ENCODE measurements at regions of chr1 and their contacts with region 1.

Region 1: GRCh38 chr1:116485071-116485735 is 85.6 kb downstream of the CD58 start:
- DNase-seq: peak; percentile 81
- H3K4me3 ChIP-seq: no peak overlapping the region
- H3K27ac ChIP-seq: no peak overlapping the region
- H3K4me1 ChIP-seq: peaks cover 34% of the 10 kb centered on the region
- H3K27me3 ChIP-seq: no peaks in the 10 kb centered on the region
- CTCF ChIP-seq: peak; percentile 91 to 94
- POLR2A ChIP-seq: no peak

Region 2: GRCh38 chr1:116159177-116159576 is 326.0 kb before region 1 on chr1:
- CTCF ChIA-PET with region 1: interaction called, 51 read pairs
- POLR2A ChIA-PET with region 1: no interaction called
- dilution Hi-C with region 1: no loop called
- intact Hi-C with region 1: no loop called
- DNase-seq: no peak
- H3K4me3 ChIP-seq: no peak overlapping the region
- H3K27ac ChIP-seq: no peak overlapping the region
- H3K4me1 ChIP-seq: no peaks in the 10 kb centered on the region
- H3K27me3 ChIP-seq: peaks cover 16 to 18% of the 10 kb centered on the region in 2 experiments
- CTCF ChIP-seq: no peak
- POLR2A ChIP-seq: no peak

Region 3: GRCh38 chr1:116202934-116203723 is 282.1 kb before region 1 on chr1:
- CTCF ChIA-PET with region 1: no interaction called
- POLR2A ChIA-PET with region 1: no interaction called
- dilution Hi-C with region 1: no loop called
- intact Hi-C with region 1: no loop called
- DNase-seq: no peak
- H3K4me3 ChIP-seq: no peak overlapping the region
- H3K27ac ChIP-seq: no peak overlapping the region
- H3K4me1 ChIP-seq: no peaks in the 10 kb centered on the region
- H3K27me3 ChIP-seq: peaks cover 0 to 4% of the 10 kb centered on the region in 2 experiments
- CTCF ChIP-seq: no peak
- POLR2A ChIP-seq: no peak

Region 4: DNA sequence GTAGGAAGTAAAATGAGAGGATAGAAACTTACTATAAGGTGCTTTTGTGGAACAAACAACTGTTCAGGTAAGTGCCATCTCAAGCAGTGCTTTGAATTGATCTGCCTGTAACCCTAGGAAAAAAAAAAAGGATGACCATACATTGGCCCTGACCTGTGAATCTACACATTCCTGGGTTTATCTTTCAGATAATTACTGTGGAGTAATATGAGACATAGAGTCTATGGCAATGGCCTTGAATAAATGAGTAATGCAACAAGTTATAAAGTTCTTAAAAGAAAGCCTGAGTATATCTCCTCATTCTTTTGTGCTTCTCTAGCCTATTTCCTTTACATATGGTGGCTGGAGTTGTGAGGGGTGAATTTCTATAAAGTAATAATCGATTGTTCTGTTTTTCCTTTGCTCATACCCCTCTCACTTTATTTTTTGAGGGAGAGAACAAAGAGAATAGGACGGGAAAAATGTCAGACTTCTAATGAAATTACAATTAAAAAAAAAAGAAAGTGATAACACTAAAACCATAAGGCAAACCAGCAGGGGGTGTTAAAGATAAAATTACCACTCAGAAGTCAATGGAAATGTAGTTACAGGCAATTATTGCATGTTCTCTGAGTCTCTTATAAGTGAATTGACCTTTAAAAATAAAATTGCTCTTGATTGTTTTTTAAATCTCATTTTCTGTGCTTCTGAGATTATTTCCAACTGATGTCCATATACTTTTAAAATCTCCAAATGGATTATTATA is 124.6 kb before region 1 on chr1:
- CTCF ChIA-PET with region 1: interaction called, 78 read pairs
- POLR2A ChIA-PET with region 1: no interaction called
- dilution Hi-C with region 1: no loop called
- intact Hi-C with region 1: loop called (anchors 1 kb)
- DNase-seq: peak; percentile 65
- H3K4me3 ChIP-seq: no peak overlapping the region
- H3K27ac ChIP-seq: no peak overlapping the region
- H3K4me1 ChIP-seq: peaks cover 21% of the 10 kb centered on the region
- H3K27me3 ChIP-seq: peaks cover 0 to 3% of the 10 kb centered on the region in 2 experiments
- CTCF ChIP-seq: peak; percentile 26 to 27
- POLR2A ChIP-seq: no peak

Region 5: DNA sequence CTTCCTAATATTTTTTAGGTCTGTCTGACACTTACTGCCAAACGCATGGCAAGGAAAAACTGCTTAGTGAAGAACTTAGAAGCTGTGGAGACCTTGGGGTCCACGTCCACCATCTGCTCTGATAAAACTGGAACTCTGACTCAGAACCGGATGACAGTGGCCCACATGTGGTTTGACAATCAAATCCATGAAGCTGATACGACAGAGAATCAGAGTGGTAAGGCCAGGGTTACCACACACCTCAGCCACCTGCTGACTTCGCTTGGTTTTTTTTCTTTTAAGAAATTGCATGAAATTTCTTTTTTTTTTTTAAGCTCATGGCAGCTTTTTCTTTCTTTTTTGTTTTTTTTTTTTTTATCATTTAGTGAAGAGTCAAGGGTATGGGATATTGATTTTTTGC is 95.0 kb before region 1 on chr1:
- CTCF ChIA-PET with region 1: interaction called, 26 read pairs
- POLR2A ChIA-PET with region 1: no interaction called
- dilution Hi-C with region 1: loop called (anchors 25 kb)
- intact Hi-C with region 1: no loop called
- DNase-seq: no peak
- H3K4me3 ChIP-seq: no peak overlapping the region
- H3K27ac ChIP-seq: no peak overlapping the region
- H3K4me1 ChIP-seq: no peaks in the 10 kb centered on the region
- H3K27me3 ChIP-seq: no peaks in the 10 kb centered on the region
- CTCF ChIP-seq: no peak
- POLR2A ChIP-seq: no peak

Region 6: DNA sequence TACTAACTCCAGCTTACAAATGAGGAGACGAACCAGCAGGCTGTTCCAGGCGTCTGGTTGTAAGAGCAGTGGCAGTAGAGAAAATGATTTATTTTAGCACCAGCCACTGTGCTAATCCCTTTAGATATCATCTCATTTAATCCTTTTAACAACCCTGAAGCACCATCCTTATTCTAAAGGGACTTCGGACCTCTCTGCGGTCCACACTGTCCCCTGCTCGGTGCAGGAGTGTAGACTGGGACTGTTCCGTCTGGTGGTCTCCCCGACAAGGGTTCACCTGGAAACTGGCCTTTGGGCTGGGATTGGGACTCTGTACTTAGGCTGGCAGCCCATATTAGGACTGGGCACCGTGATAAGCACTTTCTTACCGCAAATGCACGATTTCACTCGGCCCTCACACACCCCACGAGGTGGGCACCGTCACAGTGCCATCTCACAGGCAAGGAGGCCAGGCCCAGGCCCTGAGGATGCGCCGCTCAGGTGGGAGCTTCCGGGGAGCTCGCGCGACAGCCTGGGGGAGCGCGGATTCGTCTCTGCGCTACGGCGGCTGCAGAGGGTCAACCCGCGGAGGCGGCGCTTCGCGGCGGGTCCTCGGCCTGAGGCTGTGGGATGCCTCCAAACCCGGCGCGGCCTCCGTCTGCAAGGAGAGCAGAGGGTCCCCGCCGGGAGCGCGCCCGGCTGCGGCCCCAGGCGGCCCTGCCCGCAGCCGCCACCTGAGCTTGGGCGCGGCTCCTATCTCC is 66.9 kb before region 1 on chr1:
- CTCF ChIA-PET with region 1: interaction called, 65 read pairs
- POLR2A ChIA-PET with region 1: no interaction called
- dilution Hi-C with region 1: no loop called
- intact Hi-C with region 1: loop called (anchors 2 kb)
- DNase-seq: peak; percentile 72
- H3K4me3 ChIP-seq: peak overlapping the region; percentile 61 to 89 (median 80)
- H3K27ac ChIP-seq: peak overlapping the region; percentile 42
- H3K4me1 ChIP-seq: peaks cover 11% of the 10 kb centered on the region
- H3K27me3 ChIP-seq: no peaks in the 10 kb centered on the region
- CTCF ChIP-seq: no peak
- POLR2A ChIP-seq: no peak

Region 7: GRCh38 chr1:116472431-116472961 is 12.7 kb before region 1 on chr1:
- CTCF ChIA-PET with region 1: interaction called, 38 read pairs
- POLR2A ChIA-PET with region 1: no interaction called
- dilution Hi-C with region 1: no loop called
- intact Hi-C with region 1: no loop called
- DNase-seq: peak; percentile 55
- H3K4me3 ChIP-seq: no peak overlapping the region
- H3K27ac ChIP-seq: no peak overlapping the region
- H3K4me1 ChIP-seq: no peaks in the 10 kb centered on the region
- H3K27me3 ChIP-seq: no peaks in the 10 kb centered on the region
- CTCF ChIP-seq: no peak
- POLR2A ChIP-seq: no peak

Region 8: GRCh38 chr1:116711263-116711840 is 226.1 kb after region 1 on chr1:
- CTCF ChIA-PET with region 1: no interaction called
- POLR2A ChIA-PET with region 1: no interaction called
- dilution Hi-C with region 1: no loop called
- intact Hi-C with region 1: no loop called
- DNase-seq: no peak
- H3K4me3 ChIP-seq: no peak overlapping the region
- H3K27ac ChIP-seq: no peak overlapping the region
- H3K4me1 ChIP-seq: no peaks in the 10 kb centered on the region
- H3K27me3 ChIP-seq: no peaks in the 10 kb centered on the region
- CTCF ChIP-seq: no peak
- POLR2A ChIP-seq: no peak

Measured in endothelial cell of umbilical vein (primary cell).